ENCODE measurements at regions of chr5 and their contacts with region 1.

Region 1: GRCh38 chr5:79448336-79448735 is 65.6 kb downstream of the HOMER1 start:
- DNase-seq: no peak
- ATAC-seq: no peak

Region 2: GRCh38 chr5:79811081-79811480 is 362.7 kb after region 1 on chr5:
- intact Hi-C with region 1: loop called (anchors 5 kb)
- DNase-seq: no peak
- ATAC-seq: no peak

Measured in sciatic nerve (tissue), 2 donors.